ENCODE measurements at regions of chr16 and their contacts with region 1.

Region 1: DNA sequence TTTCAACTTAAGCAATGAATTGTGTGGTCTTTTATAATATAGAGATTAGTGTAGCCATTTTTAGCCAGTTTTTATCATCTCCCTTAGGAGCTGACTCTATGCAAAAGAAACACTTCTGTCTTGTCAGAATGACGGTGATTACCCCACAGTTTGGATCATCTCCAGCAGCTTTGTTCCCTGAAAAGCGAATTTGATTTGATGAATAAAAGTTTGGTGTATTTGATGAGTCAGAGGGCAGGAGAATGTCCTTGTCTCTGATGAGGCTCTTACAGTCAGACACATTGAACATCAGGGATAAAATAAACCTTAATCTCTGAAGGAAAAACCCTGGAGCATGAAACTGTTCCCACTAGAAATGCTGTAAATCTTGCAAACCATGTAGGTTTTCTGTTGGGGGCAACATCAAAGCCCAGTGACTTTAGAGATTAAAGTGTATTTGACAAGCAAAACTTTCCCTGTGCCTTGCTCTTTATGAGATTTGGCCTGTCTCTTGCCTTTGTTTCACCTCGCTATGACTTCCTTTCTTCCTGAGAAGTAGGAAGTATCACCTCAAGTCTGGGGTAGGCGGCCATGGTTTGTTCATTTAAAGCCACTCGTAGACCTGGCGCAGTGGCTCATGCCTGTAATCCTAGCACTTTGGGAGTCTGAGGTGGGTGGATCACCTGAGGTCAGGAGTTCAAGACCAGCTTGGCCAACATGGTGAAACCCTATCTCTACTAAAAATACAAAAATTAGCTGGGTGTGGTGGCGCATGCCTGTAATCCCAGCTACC is 209.3 kb downstream of the FTO start:
- DNase-seq: peak in 1 of 9 donors; percentile 25
- ATAC-seq: no peak
- H3K4me3 ChIP-seq: no peak overlapping the region
- H3K4me3 Mint-ChIP-seq: peak overlapping the region in 8 of 10 donors; percentile 0 to 64 (median 38)
- H3K27ac ChIP-seq: no peak overlapping the region
- H3K27ac Mint-ChIP-seq: peak overlapping the region in 6 of 9 donors; percentile 17 to 72 (median 52)
- H3K4me1 ChIP-seq: peaks cover 15 to 33% of the 10 kb centered on the region in 2 donors
- H3K4me1 Mint-ChIP-seq: peaks cover 0 to 49% (median 0%) of the 10 kb centered on the region in 7 donors
- H3K27me3 ChIP-seq: no peaks in the 10 kb centered on the region
- H3K27me3 Mint-ChIP-seq: no peaks in the 10 kb centered on the region

Region 2: GRCh38 chr16:53952215-53953208 is 39.2 kb after region 1 on chr16:
- CTCF ChIA-PET with region 1: no interaction called
- POLR2A ChIA-PET with region 1: no interaction called
- intact Hi-C with region 1: loop called in 1 of 2 experiments (anchors 1 kb)
- DNase-seq: peak in 4 of 9 donors; percentile 4 to 19 (median 16)
- ATAC-seq: peak; percentile 55
- H3K4me3 ChIP-seq: peak overlapping the region; percentile 51
- H3K4me3 Mint-ChIP-seq: peak overlapping the region; percentile 36 to 88 (median 78)
- H3K27ac ChIP-seq: peak overlapping the region; percentile 15
- H3K27ac Mint-ChIP-seq: peak overlapping the region; percentile 48 to 79 (median 71)
- H3K4me1 ChIP-seq: peaks cover 4 to 6% of the 10 kb centered on the region in 2 donors
- H3K4me1 Mint-ChIP-seq: peaks cover 24 to 53% (median 42%) of the 10 kb centered on the region in 7 donors
- H3K27me3 ChIP-seq: no peaks in the 10 kb centered on the region
- H3K27me3 Mint-ChIP-seq: no peaks in the 10 kb centered on the region

Measured in naive thymus-derived CD4-positive, alpha-beta T cell (primary cell).